Mucosa of descending colon (tissue), 3 donors: ENCODE measurements at regions of chr4 and their contacts with region 1.

Region 1: DNA sequence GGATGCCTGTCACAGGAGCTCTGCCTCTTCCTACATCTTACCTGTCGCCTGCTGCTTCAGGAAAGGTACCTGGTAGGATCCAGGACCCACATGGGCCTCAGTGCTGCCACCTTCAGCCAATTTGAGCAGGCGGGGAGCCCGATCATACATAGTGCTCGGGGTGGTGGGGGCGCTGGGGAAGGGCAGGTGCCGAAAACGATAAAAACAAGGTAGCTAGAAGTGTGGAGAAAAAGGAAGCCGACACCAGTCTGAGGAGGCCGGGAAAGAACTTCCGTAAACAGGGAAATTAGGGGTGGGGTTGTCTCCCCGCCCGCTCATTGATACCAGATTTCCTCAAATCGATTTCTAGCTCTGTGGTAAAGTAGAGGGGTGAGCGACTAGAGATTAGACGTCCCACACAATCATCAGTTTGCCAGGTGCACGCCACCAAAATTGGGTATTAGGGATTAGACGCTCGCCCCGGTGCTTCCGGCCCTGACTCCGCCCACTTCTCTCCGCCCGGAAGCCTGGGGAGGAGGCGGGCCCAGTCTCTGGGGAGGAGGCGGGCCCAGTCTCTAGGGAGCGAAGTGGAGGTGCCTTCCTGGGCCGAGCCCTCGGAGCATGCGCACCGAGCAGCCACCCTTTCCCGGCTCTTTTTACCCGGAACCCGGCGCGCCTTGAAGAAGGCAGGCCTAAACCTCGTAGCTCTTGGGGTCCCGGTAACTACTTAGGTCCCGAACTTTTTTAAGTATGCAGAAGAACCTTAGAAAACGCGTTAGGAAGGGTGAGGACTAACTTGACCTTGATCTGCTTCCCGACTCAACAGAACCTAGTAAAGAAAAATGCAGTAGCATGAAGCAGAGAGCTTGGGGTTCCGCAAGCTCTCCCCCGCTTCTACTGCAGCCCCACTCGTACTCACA is at the start of gene STPG2:
- DNase-seq: peak; percentile 94 to 97 (median 96)
- ATAC-seq: peak; percentile 100
- H3K4me3 ChIP-seq: peak within 1 kb of the TSS; percentile 42
- H3K4me1 ChIP-seq: no peaks in the 10 kb centered on the region
- CTCF ChIP-seq: peak; percentile 38
- total RNA-seq, gene STPG2: 0.17 to 1.3 (median 0.41) TPM

Region 2: GRCh38 chr4:97923096-97923495 is 220.2 kb before region 1 on chr4:
- intact Hi-C with region 1: no loop called
- DNase-seq: peak in 1 of 3 donors; percentile 39
- ATAC-seq: no peak
- H3K4me3 ChIP-seq: no peak overlapping the region
- H3K4me1 ChIP-seq: no peaks in the 10 kb centered on the region
- CTCF ChIP-seq: no peak

Region 3: GRCh38 chr4:98199209-98199608 is 56.0 kb after region 1 on chr4:
- intact Hi-C with region 1: no loop called
- DNase-seq: no peak
- ATAC-seq: no peak
- H3K4me3 ChIP-seq: no peak overlapping the region
- H3K4me1 ChIP-seq: no peaks in the 10 kb centered on the region
- CTCF ChIP-seq: no peak

Region 4: GRCh38 chr4:98260579-98261290 is 117.5 kb after region 1 on chr4:
- intact Hi-C with region 1: loop called in 1 of 2 experiments (anchors 10 kb)
- DNase-seq: peak; percentile 96 to 98 (median 98)
- ATAC-seq: peak; percentile 94
- H3K4me3 ChIP-seq: peak overlapping the region; percentile 50
- H3K4me1 ChIP-seq: peaks cover 15% of the 10 kb centered on the region
- CTCF ChIP-seq: no peak